ENCODE measurements at regions of chr7 and their contacts with region 1.

Region 1: DNA sequence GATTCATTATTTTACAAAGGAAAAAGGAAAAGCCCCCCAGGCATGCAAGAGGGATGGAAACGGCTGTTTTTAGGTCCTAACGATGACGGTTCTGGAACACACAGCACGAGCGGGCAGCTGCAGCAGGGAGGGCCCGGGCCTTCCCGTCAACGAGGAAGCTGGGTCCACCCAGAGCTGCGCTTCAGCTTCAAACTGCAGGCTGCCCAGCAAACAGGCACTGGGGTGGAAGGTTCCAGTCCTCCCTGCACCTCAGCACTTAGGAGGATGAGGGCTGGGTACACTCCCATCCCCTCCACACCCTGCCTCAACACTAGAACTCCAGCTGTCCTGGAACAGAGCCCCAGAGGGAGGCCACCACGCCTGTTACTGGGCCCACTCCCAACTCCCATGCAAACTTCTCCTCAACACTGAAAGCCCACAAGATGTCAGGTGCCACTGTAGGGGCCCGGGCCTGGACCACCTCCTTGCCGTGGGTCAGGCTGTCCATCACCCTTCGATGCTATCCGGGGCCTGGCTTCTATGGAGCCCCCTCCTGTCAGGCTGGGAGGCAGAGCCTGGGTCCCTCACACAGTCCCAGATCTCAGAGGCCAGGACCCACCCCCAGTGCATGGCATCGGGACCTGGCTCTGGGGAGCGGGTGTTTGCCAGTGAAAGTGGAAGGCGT is 33.0 kb downstream of the PAPOLB start:
- DNase-seq: no peak
- H3K4me3 ChIP-seq: no peak overlapping the region
- H3K27ac ChIP-seq: peak overlapping the region; percentile 46
- H3K4me1 ChIP-seq: peaks cover 7% of the 10 kb centered on the region
- H3K27me3 ChIP-seq: no peaks in the 10 kb centered on the region
- CTCF ChIP-seq: no peak

Region 2: GRCh38 chr7:4712281-4713182 is 116.3 kb before region 1 on chr7:
- intact Hi-C with region 1: no loop called
- DNase-seq: no peak
- H3K4me3 ChIP-seq: no peak overlapping the region
- H3K27ac ChIP-seq: peak overlapping the region; percentile 36
- H3K4me1 ChIP-seq: peaks cover 70% of the 10 kb centered on the region
- H3K27me3 ChIP-seq: no peaks in the 10 kb centered on the region
- CTCF ChIP-seq: no peak

Region 3: GRCh38 chr7:4883374-4884144 is 54.7 kb after region 1 on chr7 and contains the start of gene RADIL:
- intact Hi-C with region 1: loop called (anchors 5 kb)
- DNase-seq: peak; percentile 92
- H3K4me3 ChIP-seq: peak within 1 kb of the TSS; percentile 85
- H3K27ac ChIP-seq: peak within 1 kb of the TSS; percentile 86
- H3K4me1 ChIP-seq: peaks cover 40% of the 10 kb centered on the region
- H3K27me3 ChIP-seq: peaks cover 37% of the 10 kb centered on the region
- CTCF ChIP-seq: peak; percentile 92
- total RNA-seq, gene RADIL: 4.5 TPM

Region 4: DNA sequence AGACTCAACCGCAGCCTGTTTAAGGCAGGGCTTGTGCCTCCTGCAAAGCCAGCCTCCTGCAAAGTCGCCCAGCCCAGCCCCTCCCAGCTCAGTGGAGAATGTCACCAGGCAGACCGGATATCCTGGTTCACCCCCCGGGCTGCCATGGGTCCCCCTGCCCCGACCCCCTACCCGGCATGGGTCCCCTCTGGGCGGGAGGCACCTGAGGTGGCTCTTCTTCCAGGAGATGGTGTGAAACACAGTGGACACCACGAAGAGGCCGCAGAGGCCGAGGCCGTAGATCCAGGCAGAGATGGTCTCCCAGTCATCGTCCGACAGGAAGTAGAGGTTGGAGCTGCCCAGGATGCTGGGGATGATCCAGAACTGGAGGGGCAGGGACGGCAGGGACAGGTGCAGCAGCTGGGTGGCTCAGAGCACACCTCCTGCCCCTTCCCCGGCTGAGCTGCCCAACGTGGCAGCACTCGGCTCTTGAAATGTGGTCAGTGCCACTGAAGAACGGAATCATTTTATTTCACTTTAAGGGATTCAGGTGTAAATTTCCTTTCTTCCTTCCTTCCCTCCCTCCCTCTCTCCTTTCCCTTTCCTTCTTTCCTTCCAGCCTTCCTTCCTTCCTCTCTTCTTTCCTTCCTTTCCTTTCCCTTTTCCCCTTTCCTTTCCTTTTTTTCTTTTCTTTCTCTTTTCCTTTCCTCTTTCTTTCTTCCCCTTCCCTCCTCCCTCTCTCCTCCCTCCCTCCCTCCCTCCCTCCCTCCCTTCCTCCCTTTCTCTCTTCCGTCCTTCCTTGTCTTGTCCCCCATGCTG is 91.3 kb after region 1 on chr7:
- intact Hi-C with region 1: no loop called
- DNase-seq: no peak
- H3K4me3 ChIP-seq: no peak overlapping the region
- H3K27ac ChIP-seq: no peak overlapping the region
- H3K4me1 ChIP-seq: no peaks in the 10 kb centered on the region
- H3K27me3 ChIP-seq: peaks cover 51% of the 10 kb centered on the region
- CTCF ChIP-seq: no peak

Measured in left ventricle myocardium inferior (tissue), 1 donor.